ENCODE measurements at regions of chr20 and their contacts with region 1.

Region 1: DNA sequence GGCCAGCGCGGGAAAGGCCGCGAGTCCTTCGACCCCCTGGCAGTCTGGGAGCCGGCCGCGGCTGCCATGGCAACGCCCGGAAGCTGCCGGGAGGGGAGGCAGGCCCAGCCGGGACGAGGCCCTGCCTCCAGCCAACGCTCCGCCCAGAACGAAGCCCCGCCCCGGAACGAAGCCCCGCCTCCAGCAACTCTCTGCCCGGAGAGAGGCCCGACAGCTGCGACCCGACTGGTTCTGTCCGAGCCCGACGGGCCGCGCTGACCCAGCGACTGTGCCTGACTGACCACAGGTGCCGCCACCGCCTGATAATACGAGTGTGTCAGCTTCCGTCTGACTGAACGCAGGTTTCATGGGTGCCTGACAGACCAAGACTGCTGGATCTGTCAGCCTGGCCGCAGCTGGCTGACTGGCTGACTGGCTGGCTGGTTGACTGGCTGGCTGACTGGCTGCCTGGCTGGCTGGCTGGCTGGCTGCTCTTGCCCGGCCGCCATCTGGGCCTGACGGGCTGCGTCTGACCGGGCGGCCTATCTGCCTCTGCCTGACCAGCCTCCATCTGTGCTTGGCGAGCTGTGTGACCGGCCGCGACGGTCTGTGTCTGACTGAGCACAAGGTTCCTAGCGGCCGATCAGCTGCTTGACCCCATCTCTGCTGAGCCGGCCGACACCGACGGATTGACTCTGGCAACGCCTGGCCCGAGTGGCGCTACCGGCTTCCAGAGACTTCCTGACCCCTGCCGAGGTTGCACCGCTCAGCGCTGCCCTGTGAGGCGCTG is 89.7 kb upstream of the EPB41L1 start:
- DNase-seq: peak; percentile 95
- ATAC-seq: peak; percentile 97
- H3K4me3 ChIP-seq: peak overlapping the region; percentile 52 to 77 (median 72)
- H3K4me3 Mint-ChIP-seq: peak overlapping the region; percentile 94
- H3K27ac ChIP-seq: peak overlapping the region; percentile 24 to 83
- H3K27ac Mint-ChIP-seq: peak overlapping the region; percentile 89
- H3K4me1 ChIP-seq: peaks cover 11 to 17% of the 10 kb centered on the region in 2 donors
- H3K4me1 Mint-ChIP-seq: peaks cover 6% of the 10 kb centered on the region
- H3K27me3 ChIP-seq: peaks cover 0 to 7% (median 1%) of the 10 kb centered on the region in 4 experiments
- H3K27me3 Mint-ChIP-seq: peaks cover 4% of the 10 kb centered on the region
- CTCF ChIP-seq: no peak

Region 2: DNA sequence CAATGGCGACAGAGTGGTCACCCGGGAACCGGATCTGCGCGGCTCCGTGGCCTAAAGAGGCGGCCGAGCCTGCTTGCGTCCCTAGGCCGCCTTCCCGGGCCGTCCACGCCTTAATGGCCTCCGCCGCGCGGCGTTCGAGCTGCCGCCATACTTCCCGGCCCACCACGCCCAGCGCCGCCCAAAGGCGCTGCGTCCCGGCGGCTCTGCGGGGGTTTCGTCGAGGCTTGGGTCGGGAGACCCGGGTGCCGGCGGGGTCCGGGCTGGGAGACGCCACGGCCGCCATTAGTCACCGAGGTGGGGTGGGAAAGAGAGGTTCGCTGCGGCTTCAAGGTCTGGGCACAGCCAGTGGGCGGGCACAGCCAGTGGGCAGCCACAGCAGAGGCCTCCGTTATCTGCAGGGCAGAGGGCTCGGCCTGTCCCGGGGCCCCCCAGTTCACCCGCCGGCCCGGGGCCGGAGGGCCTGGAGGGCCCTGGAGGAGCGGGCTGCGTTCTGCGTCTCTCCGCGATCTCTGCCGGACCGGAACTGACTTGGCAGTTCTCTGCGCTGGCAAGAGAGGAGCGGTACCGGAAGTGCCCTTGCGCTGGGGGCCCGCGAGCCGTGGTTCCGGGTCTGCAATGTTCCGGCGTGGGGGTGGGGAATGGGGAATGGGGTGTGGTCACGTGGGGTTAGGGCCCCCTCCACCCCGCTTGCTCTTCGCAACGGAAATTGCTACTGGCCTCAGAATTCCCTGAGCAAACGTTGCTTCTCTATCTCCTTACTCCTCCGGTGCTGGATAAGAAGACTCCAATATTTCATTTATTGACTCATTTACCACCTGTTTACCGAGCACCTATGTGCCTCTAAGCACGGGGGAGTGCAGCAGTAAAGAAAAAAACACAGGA is 14.2 kb before region 1 on chr20:
- CTCF ChIA-PET with region 1: interaction called, 3 read pairs
- POLR2A ChIA-PET with region 1: no interaction called
- intact Hi-C with region 1: loop called (anchors 1 kb)
- DNase-seq: peak; percentile 88
- ATAC-seq: peak; percentile 93
- H3K4me3 ChIP-seq: peak overlapping the region; percentile 68 to 99 (median 96)
- H3K4me3 Mint-ChIP-seq: peak overlapping the region; percentile 93
- H3K27ac ChIP-seq: peak overlapping the region; percentile 91 to 95
- H3K27ac Mint-ChIP-seq: peak overlapping the region; percentile 94
- H3K4me1 ChIP-seq: peaks cover 11 to 12% of the 10 kb centered on the region in 2 donors
- H3K4me1 Mint-ChIP-seq: peaks cover 45% of the 10 kb centered on the region
- H3K27me3 ChIP-seq: no peaks in the 10 kb centered on the region
- H3K27me3 Mint-ChIP-seq: peaks cover 11% of the 10 kb centered on the region
- CTCF ChIP-seq: no peak

Region 3: DNA sequence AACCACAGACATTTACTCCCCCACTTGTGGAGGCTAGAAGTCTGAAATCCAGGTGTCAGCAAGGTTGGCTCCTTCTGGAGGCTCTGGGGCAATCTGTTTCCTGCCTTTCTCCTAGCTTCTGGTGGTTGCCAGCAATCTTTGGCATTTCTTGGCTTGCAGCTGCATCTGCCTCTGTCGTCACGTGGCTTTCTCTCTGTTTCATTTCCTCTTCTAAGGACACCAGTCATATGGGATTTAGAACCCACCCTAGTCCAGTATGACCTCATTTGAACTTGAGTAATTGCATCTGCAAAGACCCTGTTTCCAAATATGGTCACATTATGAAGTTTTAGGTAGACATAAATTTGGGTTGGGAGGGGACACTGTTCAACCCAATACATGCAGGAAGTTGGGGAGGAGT is 33.5 kb after region 1 on chr20:
- CTCF ChIA-PET with region 1: interaction called, 3 read pairs
- POLR2A ChIA-PET with region 1: no interaction called
- intact Hi-C with region 1: loop called (anchors 2 kb)
- DNase-seq: peak; percentile 82
- ATAC-seq: peak; percentile 76
- H3K4me3 ChIP-seq: no peak overlapping the region
- H3K4me3 Mint-ChIP-seq: peak overlapping the region; percentile 10
- H3K27ac ChIP-seq: peak overlapping the region in 1 of 2 donors; percentile 49
- H3K27ac Mint-ChIP-seq: peak overlapping the region; percentile 66
- H3K4me1 ChIP-seq: peaks cover 28 to 32% of the 10 kb centered on the region in 2 donors
- H3K4me1 Mint-ChIP-seq: peaks cover 29% of the 10 kb centered on the region
- H3K27me3 ChIP-seq: peaks cover 0 to 13% (median 7%) of the 10 kb centered on the region in 4 experiments
- H3K27me3 Mint-ChIP-seq: peaks cover 6% of the 10 kb centered on the region
- CTCF ChIP-seq: no peak

Region 4: DNA sequence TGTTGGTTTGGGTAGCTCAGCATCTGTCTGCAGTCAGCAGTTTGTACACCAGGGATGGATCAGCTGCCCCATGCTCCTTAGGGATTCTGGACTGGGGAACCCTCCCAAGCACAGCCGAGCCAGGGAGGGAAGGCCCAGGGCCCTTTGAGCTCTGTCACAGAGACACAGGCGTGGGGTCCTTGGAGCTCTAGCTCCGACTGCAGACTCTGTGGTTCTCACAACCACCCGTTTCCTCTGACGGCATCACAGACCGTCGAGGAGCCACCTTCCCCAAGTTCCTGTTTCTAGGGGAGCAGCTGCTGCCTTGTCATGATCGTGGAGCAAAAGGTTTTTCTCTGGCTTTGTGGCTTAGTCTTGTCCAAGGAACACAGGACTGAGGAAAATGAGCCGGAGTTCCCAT is 581.2 kb after region 1 on chr20 and contains the start of gene SLA2:
- CTCF ChIA-PET with region 1: no interaction called
- POLR2A ChIA-PET with region 1: no interaction called
- intact Hi-C with region 1: no loop called
- DNase-seq: peak; percentile 60
- ATAC-seq: peak; percentile 86
- H3K4me3 ChIP-seq: no peak within 1 kb of the TSS
- H3K4me3 Mint-ChIP-seq: peak within 1 kb of the TSS; percentile 39
- H3K27ac ChIP-seq: no peak within 1 kb of the TSS
- H3K27ac Mint-ChIP-seq: peak within 1 kb of the TSS; percentile 80
- H3K4me1 ChIP-seq: peaks cover 9 to 13% of the 10 kb centered on the region in 2 donors
- H3K4me1 Mint-ChIP-seq: peaks cover 27% of the 10 kb centered on the region
- H3K27me3 ChIP-seq: no peaks in the 10 kb centered on the region
- H3K27me3 Mint-ChIP-seq: no peaks in the 10 kb centered on the region
- CTCF ChIP-seq: no peak
- total RNA-seq, gene SLA2: 0.58 and 0.76 TPM in 2 replicates

Measured in B cell (primary cell).